A549 (cell line): ENCODE measurements at regions of chrX and their contacts with region 1.

Region 1: GRCh38 chrX:153470435-153471363 is at the start of gene HAUS7:
- DNase-seq: peak; percentile 85 to 93
- ATAC-seq: peak; percentile 87 to 90
- H3K4me3 ChIP-seq: peak within 1 kb of the TSS; percentile 75
- H3K27ac ChIP-seq: peak within 1 kb of the TSS; percentile 64 to 90
- H3K4me1 ChIP-seq: peaks cover 3% of the 10 kb centered on the region; the same call in 1 of the 3 replicates
- CTCF ChIP-seq: peak; percentile 77
- EP300 ChIP-seq: no peak
- POLR2A ChIP-seq: peak; percentile 60
- RAD21 ChIP-seq: peak; percentile 57 to 63
- polyA plus RNA-seq, gene HAUS7: 30.3 and 39.1 TPM in 2 replicates

Region 2: GRCh38 chrX:153482376-153483015 is 11.8 kb after region 1 on chrX:
- CTCF ChIA-PET with region 1: interaction called, 11 read pairs
- POLR2A ChIA-PET with region 1: no interaction called
- DNase-seq: no peak
- ATAC-seq: peak in 1 of 2 experiments; percentile 20; a peak in 3 of 6 replicates
- H3K4me3 ChIP-seq: no peak overlapping the region
- H3K27ac ChIP-seq: no peak overlapping the region
- H3K4me1 ChIP-seq: no peaks in the 10 kb centered on the region
- CTCF ChIP-seq: no peak
- EP300 ChIP-seq: no peak
- POLR2A ChIP-seq: no peak
- RAD21 ChIP-seq: no peak

Region 3: DNA sequence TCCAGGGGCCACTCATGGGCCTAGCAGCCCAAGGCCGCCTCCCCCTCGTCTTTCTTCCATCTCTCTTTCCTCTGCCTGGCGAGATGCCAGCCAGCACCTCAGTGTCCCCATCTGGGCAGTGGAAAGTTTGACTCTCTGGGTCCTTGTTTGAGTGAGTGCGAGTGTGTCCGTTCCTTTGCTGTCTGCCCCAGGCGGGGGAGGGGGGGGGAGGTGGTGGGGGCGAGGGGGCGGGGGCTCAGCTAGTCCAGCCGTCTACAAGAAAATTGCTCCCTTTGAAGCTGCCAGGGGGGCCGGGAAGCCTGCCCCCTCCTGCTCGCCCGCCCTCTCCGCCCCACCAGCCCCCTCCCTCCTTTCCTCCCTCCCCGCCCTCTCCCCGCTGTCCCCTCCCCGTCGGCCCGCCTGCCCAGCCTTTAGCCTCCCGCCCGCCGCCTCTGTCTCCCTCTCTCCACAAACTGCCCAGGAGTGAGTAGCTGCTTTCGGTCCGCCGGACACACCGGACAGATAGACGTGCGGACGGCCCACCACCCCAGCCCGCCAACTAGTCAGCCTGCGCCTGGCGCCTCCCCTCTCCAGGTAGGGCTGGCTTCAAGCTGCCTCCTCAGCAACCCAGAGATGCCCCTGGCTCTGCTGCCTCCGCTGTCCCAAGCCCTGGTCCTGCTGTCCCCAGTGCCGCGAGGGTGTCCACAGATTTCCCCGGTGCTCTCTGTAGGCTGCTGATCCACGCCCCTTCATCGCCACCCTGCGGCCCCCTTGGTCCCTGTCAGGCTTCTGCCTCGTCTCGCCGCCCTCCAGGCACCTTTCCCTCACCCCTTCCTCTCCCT is 24.1 kb after region 1 on chrX and contains the start of gene BGN:
- CTCF ChIA-PET with region 1: interaction called, 10 read pairs
- POLR2A ChIA-PET with region 1: no interaction called
- DNase-seq: peak in 1 of 2 experiments; percentile 15
- ATAC-seq: peak in 1 of 2 experiments; percentile 64; a peak in 3 of 6 replicates
- H3K4me3 ChIP-seq: no peak within 1 kb of the TSS
- H3K27ac ChIP-seq: no peak within 1 kb of the TSS
- H3K4me1 ChIP-seq: no peaks in the 10 kb centered on the region
- CTCF ChIP-seq: no peak
- EP300 ChIP-seq: no peak
- POLR2A ChIP-seq: no peak
- RAD21 ChIP-seq: no peak; a peak in 1 of 5 replicates
- polyA plus RNA-seq, gene BGN: not detected in 2 replicates

Region 4: GRCh38 chrX:153517423-153517822 is 46.7 kb after region 1 on chrX and contains the start of gene ATP2B3:
- CTCF ChIA-PET with region 1: interaction called, 13 read pairs
- POLR2A ChIA-PET with region 1: no interaction called
- DNase-seq: no peak
- ATAC-seq: no peak
- H3K4me3 ChIP-seq: peak within 1 kb of the TSS; percentile 38
- H3K27ac ChIP-seq: peak within 1 kb of the TSS in 1 of 2 experiments; percentile 49; a peak in 1 of 6 replicates
- H3K4me1 ChIP-seq: peaks cover 19% of the 10 kb centered on the region
- CTCF ChIP-seq: no peak
- EP300 ChIP-seq: no peak
- POLR2A ChIP-seq: no peak
- RAD21 ChIP-seq: no peak
- polyA plus RNA-seq, gene ATP2B3: 0.08 and 0.13 TPM in 2 replicates

Region 5: DNA sequence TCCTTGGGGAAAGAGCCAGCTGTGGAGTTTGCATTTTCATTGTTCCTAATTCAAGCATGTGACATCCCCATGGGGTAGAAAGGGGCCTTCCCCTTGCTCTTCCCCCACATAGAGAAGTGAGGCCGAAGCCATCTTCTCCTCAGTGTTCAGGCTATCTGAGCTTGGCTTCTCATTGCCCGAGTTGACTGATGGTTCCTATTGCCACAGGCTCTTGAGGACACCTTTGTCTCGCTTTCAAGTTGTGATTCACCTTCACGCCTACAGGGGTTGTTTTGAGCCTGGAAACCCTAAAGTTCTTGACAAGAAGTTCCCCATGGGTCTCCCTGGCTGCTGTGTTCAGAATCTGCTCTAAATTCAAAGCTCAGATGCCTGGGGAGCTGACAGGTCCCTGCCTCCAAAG is 103.3 kb after region 1 on chrX:
- CTCF ChIA-PET with region 1: no interaction called
- POLR2A ChIA-PET with region 1: no interaction called
- DNase-seq: peak in 1 of 2 experiments; percentile 27
- ATAC-seq: peak in 1 of 2 experiments; percentile 57; a peak in 3 of 6 replicates
- H3K4me3 ChIP-seq: no peak overlapping the region
- H3K27ac ChIP-seq: no peak overlapping the region
- H3K4me1 ChIP-seq: no peaks in the 10 kb centered on the region
- CTCF ChIP-seq: no peak
- EP300 ChIP-seq: no peak
- POLR2A ChIP-seq: no peak
- RAD21 ChIP-seq: no peak